Heart left ventricle (tissue), 16 donors: ENCODE measurements at regions of chr11 and their contacts with region 1.

Region 1: DNA sequence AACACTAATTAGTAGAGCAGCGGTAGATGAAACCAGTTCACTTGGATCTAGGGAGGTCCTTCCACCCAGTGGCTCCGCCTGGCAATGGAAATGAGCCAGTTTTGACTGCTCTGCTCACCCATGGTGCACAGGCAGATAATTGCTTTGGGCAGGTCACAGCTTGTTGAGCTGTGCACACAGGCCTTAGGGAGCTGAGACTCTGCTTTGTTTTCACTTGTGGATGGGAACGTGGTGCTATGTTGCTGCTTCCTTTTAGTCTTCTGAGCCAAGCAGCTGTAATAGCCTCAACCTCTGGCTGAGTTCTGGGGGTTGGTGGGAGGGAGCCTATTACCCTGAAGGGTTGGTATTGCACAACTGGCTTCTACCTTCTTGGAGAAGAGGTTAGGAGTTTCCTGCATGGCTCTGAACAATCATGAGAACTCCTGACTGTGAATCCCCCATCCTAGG is 262.3 kb upstream of the MTNR1B start:
- DNase-seq: peak in 1 of 5 donors; percentile 28
- ATAC-seq: peak; percentile 48 to 66 (median 50)
- H3K4me3 ChIP-seq: no peak overlapping the region
- H3K27ac ChIP-seq: peak overlapping the region; percentile 16 to 94 (median 80)
- H3K4me1 ChIP-seq: peaks cover 0 to 44% (median 16%) of the 10 kb centered on the region in 12 donors
- H3K27me3 ChIP-seq: no peaks in the 10 kb centered on the region
- CTCF ChIP-seq: no peak
- POLR2A ChIP-seq: no peak

Region 2: GRCh38 chr11:92443199-92443598 is 264.0 kb before region 1 on chr11:
- intact Hi-C with region 1: loop called in 1 of 10 experiments (anchors 10 kb)
- DNase-seq: no peak
- ATAC-seq: peak in 3 of 4 donors; percentile 65 to 75 (median 67)
- H3K4me3 ChIP-seq: no peak overlapping the region
- H3K27ac ChIP-seq: no peak overlapping the region
- H3K4me1 ChIP-seq: peaks cover 0 to 12% (median 2%) of the 10 kb centered on the region in 12 donors
- H3K27me3 ChIP-seq: no peaks in the 10 kb centered on the region
- CTCF ChIP-seq: no peak
- POLR2A ChIP-seq: no peak

Region 3: GRCh38 chr11:92775003-92775676 is 67.9 kb after region 1 on chr11:
- intact Hi-C with region 1: loop called in 1 of 10 experiments (anchors 10 kb)
- DNase-seq: no peak
- ATAC-seq: no peak
- H3K4me3 ChIP-seq: no peak overlapping the region
- H3K27ac ChIP-seq: no peak overlapping the region
- H3K4me1 ChIP-seq: peaks cover 0 to 11% (median 0%) of the 10 kb centered on the region in 12 donors
- H3K27me3 ChIP-seq: no peaks in the 10 kb centered on the region
- CTCF ChIP-seq: no peak
- POLR2A ChIP-seq: no peak

Region 4: DNA sequence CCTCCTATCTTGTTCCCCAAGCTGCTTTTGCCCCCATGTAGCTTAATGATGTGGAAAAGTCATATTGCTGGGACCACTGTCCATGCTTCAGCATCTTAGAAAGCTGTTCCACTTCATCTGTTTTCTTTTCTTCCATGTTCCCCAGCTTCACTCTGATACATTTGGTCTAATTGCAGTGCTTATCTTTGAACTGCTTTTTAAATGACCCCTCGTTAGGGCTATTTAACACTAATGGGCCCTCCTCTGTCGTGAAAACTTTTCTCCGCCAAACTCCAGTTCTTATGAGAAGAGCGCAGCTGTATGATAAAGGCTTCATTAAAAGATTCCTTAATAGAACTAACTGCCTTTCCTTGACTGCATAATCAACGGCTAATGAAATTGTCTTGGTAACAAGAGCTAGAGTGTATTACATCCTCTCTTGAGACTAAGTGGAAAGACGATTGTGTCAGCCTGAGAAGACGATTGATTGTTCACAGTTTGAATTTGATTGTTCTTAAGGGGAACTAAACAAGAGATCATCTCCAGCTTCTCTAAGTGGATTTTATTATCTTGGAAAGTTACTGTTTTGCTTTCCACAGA is 97.3 kb after region 1 on chr11:
- intact Hi-C with region 1: no loop called
- DNase-seq: no peak
- ATAC-seq: no peak
- H3K4me3 ChIP-seq: no peak overlapping the region
- H3K27ac ChIP-seq: no peak overlapping the region
- H3K4me1 ChIP-seq: no peaks in the 10 kb centered on the region
- H3K27me3 ChIP-seq: no peaks in the 10 kb centered on the region
- CTCF ChIP-seq: no peak
- POLR2A ChIP-seq: no peak

Region 5: DNA sequence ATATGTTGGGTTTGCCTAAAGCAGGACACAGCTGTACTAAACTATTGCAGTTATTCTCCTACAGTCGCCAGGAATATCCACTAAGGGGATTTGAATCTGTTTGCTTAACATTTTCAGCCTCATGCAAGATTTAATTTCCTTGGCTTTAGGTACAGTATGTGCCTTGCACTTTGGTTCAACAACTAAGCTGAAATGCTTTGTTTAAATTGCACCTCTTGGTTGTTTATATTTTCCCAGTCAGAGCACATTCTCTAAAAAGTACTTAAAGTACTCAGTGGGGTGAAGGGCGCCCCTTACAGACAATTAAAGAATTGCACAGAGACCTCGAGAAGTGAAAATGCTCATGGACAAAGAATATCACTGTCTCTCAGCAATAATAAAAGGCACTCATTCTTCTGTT is 154.4 kb after region 1 on chr11:
- intact Hi-C with region 1: loop called in 1 of 10 experiments (anchors 10 kb)
- DNase-seq: no peak
- ATAC-seq: no peak
- H3K4me3 ChIP-seq: no peak overlapping the region
- H3K27ac ChIP-seq: no peak overlapping the region
- H3K4me1 ChIP-seq: no peaks in the 10 kb centered on the region
- H3K27me3 ChIP-seq: peaks cover 0 to 4% (median 0%) of the 10 kb centered on the region in 9 donors
- CTCF ChIP-seq: peak in 1 of 12 donors; percentile 7
- POLR2A ChIP-seq: no peak